Heart right ventricle (tissue), 16 donors: ENCODE measurements at regions of chr20 and their contacts with region 1.

Region 1: GRCh38 chr20:25294459-25295385 is 46.8 kb downstream of the PYGB start:
- DNase-seq: peak in 1 of 2 donors; percentile 54
- ATAC-seq: peak; percentile 19 to 54 (median 44)
- H3K4me3 ChIP-seq: no peak overlapping the region
- H3K27ac ChIP-seq: peak overlapping the region; percentile 29 to 85 (median 67)
- H3K4me1 ChIP-seq: peaks cover 24 to 73% (median 44%) of the 10 kb centered on the region in 9 donors
- H3K27me3 ChIP-seq: no peaks in the 10 kb centered on the region
- CTCF ChIP-seq: peak; percentile 36 to 80 (median 63)

Region 2: DNA sequence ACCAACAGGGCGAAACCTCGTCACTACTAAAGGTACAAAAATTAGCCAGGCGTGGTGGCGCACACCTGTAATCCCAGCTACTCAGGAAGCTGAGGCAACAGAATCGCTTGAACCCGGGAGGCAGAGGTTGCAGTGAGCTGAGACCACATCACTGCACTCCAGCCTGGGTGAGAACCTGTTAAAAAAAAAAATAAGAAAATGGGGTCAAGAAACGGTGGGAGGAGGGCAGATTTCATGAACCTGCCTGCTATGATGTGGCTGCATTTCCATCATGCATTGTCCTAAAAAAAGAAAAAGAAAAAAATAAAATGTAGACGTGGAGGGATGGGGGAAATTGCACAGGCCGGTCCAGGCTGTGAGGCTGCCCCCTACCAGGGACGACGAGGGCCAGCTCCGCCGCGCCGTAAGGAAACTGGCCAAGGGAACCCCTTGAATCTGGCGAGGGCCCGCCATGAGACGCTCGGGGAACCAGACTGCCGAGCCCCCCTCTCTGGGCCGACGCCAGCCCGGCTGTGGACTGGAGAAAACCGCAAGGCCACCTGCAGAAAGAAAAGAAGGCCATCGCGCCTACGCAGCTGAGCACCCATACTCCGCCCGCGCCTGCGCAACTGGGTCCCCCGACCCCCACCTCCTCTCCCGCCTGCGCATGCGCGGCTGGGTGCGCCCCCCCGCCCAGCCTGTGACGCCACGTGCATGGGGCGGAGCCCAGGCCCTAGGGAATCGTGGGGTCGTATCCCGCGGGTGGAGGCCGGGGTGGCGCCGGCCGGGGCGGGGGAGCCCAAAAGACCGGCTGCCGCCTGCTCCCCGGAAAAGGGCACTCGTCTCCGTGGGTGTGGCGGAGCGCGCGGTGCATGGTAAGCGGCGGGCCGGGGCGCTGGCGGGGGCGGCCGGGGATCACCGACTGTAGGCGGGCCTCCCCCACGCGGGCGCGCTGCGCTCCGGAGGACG is 99.4 kb before region 1 on chr20 and contains the start of gene ENTPD6:
- intact Hi-C with region 1: loop called in 1 of 10 experiments (anchors 10 kb)
- DNase-seq: peak; percentile 92 to 97
- ATAC-seq: peak; percentile 83 to 93 (median 92)
- H3K4me3 ChIP-seq: peak within 1 kb of the TSS; percentile 75 to 99 (median 92)
- H3K27ac ChIP-seq: peak within 1 kb of the TSS; percentile 84 to 97 (median 93)
- H3K4me1 ChIP-seq: peaks cover 15 to 72% (median 51%) of the 10 kb centered on the region in 9 donors
- H3K27me3 ChIP-seq: no peaks in the 10 kb centered on the region
- CTCF ChIP-seq: peak in 5 of 9 donors; percentile 13 to 51 (median 36)
- total RNA-seq, gene ENTPD6: 54.6 to 141 (median 78.0) TPM

Region 3: GRCh38 chr20:25360635-25361286 is 66.0 kb after region 1 on chr20:
- intact Hi-C with region 1: no loop called
- DNase-seq: no peak
- ATAC-seq: peak in 1 of 8 donors; percentile 30
- H3K4me3 ChIP-seq: peak overlapping the region in 1 of 10 donors; percentile 36
- H3K27ac ChIP-seq: peak overlapping the region in 3 of 10 donors; percentile 2 to 79 (median 15)
- H3K4me1 ChIP-seq: peaks cover 0 to 24% (median 10%) of the 10 kb centered on the region in 9 donors
- H3K27me3 ChIP-seq: no peaks in the 10 kb centered on the region
- CTCF ChIP-seq: no peak

Region 4: DNA sequence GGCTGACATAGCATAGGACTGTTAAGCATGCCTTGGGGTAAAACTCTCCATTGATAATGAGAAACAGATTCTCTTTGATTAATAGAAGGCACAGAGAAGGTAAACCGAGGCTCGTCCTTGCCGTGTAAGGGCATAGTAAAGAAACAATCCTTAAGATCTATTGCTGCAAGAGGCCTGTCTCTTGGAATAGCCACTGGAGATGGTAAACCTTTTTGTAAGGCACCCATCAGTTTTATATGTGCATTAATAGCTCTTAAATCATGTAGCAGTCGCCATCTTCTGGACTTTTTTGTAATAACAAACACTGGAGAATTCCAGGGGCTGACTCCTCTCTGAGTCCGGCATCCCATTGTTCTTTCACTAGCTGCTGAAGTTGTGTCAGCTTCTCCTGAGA is 104.3 kb after region 1 on chr20:
- intact Hi-C with region 1: loop called in 7 of 10 experiments (anchors 5 kb)
- DNase-seq: peak in 1 of 2 donors; percentile 31
- ATAC-seq: peak; percentile 75 to 92 (median 87)
- H3K4me3 ChIP-seq: no peak overlapping the region
- H3K27ac ChIP-seq: no peak overlapping the region
- H3K4me1 ChIP-seq: no peaks in the 10 kb centered on the region
- H3K27me3 ChIP-seq: no peaks in the 10 kb centered on the region
- CTCF ChIP-seq: peak; percentile 31 to 78 (median 63)